Transverse colon (tissue), 4 donors: ENCODE measurements at regions of chr1 and their contacts with region 1.

Region 1: DNA sequence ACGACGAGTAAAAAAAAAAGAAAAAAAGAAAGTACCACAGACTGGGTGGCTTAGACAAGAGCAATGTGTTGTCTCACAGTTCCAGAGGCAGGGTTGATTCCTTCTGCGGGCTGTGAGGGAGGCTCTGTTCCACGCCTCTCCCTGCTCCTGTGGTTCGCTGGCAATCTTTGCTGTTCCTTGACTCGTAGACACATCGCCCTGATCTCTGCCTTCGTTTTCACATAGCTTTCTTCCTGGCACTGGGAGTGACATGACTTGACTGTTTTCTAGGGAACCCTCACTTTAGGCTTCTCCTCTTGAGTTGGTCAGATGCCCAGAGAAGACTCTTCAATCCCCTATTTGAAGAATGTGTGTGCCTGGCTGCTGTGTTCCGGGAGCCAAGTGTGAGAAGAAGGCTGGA is 133.6 kb downstream of the TM2D1 start:
- DNase-seq: no peak
- H3K4me3 ChIP-seq: no peak overlapping the region
- H3K27ac ChIP-seq: peak overlapping the region in 2 of 4 donors; percentile 31 to 35
- H3K4me1 ChIP-seq: no peaks in the 10 kb centered on the region
- H3K27me3 ChIP-seq: no peaks in the 10 kb centered on the region
- CTCF ChIP-seq: no peak
- EP300 ChIP-seq: no peak
- POLR2A ChIP-seq: no peak

Region 2: DNA sequence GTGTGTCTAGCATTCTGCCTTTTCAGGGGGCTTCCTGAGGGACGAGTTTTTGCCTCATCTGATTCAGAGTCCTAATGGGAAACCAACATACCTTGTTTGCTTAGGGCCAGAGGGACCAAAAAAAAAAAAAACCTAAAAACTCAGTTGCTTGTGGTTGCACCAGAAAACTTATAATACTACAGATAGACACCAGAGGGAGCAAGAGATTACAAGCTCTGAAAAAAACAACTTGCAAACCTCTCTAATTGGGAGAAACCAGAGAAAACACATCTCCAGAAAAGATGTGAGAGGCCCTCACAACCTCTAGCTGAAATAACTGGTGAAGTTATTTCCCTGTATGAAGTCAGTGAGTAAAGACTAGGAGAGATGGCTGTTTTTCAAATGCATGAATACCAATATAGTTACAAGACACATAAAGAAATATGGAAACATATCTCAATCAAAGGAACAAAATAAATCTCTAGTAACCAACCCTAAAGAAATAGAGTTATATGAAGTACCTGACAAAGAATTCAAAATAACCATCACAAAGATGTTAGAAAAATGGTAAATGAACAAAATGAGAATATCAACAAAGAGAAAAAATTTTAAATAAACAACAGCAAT is 742.7 kb before region 1 on chr1:
- in situ Hi-C with region 1: no loop called
- intact Hi-C with region 1: no loop called
- DNase-seq: no peak
- H3K4me3 ChIP-seq: no peak overlapping the region
- H3K27ac ChIP-seq: no peak overlapping the region
- H3K4me1 ChIP-seq: no peaks in the 10 kb centered on the region
- H3K27me3 ChIP-seq: no peaks in the 10 kb centered on the region
- CTCF ChIP-seq: peak; percentile 39 to 52 (median 49)
- EP300 ChIP-seq: no peak
- POLR2A ChIP-seq: no peak

Region 3: DNA sequence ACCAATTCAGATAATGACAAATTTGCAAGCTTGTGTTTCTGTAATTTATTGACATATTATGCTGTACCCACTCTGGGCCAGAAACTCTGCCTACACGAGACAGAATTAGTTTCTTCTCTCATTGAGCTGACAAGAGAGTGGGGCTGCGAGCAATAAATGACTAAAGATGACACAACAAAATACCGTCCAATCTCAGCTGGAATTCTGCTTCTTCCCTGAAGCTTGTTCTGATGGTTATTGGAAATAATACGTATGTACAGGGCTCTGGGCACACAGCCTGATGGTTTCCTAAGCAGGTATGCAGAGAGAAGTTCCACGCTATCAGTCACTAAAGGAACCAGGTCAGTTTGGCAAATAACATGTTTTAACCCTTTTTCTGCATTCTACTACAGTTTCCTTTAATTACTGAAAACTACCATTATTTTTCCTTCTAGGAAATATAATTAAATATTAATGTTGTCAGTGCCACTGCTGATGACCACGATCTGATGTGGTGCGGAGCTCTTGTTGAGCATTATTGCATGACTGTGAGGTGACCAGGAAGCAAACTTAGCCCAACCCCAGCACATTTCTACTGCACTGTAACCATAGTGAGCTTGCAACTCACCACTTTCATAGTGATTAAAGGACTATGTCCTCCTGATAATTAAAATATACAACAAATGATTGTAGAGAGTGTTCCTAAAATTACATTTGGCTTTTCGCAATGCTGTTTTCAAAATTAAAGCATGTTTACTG is 381.9 kb after region 1 on chr1:
- in situ Hi-C with region 1: no loop called
- intact Hi-C with region 1: loop called (anchors 5 kb)
- DNase-seq: no peak
- H3K4me3 ChIP-seq: no peak overlapping the region
- H3K27ac ChIP-seq: no peak overlapping the region
- H3K4me1 ChIP-seq: no peaks in the 10 kb centered on the region
- H3K27me3 ChIP-seq: no peaks in the 10 kb centered on the region
- CTCF ChIP-seq: no peak
- EP300 ChIP-seq: no peak
- POLR2A ChIP-seq: no peak